ENCODE measurements at regions of chr2 and their contacts with region 1.

Region 1: DNA sequence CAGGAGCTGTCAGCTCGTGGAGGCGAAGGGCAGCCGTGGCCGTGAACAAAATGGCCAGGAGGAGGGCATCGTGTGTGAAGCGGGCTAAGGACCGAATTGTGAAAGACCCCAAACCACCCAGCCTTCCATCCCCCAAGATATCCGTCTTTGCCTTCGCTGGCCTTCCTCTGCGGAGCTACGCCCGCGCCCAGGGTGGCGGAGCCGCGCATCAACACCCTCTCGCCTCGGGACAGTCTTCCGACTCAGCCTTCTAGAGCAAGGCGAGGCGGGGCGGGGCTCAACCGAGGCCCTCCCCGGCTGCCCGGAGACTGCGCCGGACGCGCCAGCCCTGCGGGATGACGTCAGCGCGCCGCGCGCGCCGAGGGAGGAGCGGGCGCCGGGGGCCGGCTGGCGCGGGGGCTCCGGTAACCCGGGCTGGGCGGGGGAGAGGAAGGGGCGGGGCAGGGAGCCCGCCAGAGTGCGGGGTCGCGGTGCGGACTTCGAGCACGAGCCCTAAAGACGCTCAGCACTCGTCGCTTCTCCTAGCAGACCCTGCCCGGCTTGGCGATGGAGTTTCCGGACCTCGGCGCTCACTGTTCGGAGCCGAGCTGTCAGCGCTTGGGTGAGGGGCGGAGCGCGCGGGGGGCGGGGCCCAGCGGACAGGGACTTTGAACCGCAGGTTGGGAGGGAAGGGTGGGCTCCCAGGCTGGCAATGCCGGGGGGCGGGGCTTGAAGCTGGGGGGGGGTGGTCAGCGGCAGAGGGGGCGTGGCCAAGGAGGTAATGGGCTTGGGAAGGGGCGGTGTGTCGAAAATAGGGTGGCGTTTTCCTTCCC is at the start of gene ZFAND2B:
- DNase-seq: peak; percentile 88 to 98 (median 95)
- ATAC-seq: peak; percentile 93
- H3K4me3 ChIP-seq: peak within 1 kb of the TSS; percentile 69
- H3K4me3 Mint-ChIP-seq: peak within 1 kb of the TSS; percentile 90
- H3K27ac ChIP-seq: peak within 1 kb of the TSS; percentile 89 to 90
- H3K27ac Mint-ChIP-seq: peak within 1 kb of the TSS; percentile 93
- H3K4me1 ChIP-seq: peaks cover 53% of the 10 kb centered on the region
- H3K4me1 Mint-ChIP-seq: peaks cover 47% of the 10 kb centered on the region
- H3K27me3 ChIP-seq: no peaks in the 10 kb centered on the region
- H3K27me3 Mint-ChIP-seq: no peaks in the 10 kb centered on the region
- CTCF ChIP-seq: no peak
- total RNA-seq, gene ZFAND2B: 65.9 to 67.4 TPM

Region 2: GRCh38 chr2:219155054-219155644 is 51.5 kb before region 1 on chr2:
- CTCF ChIA-PET with region 1: interaction called, 32 read pairs
- POLR2A ChIA-PET with region 1: interaction called, 16 read pairs
- intact Hi-C with region 1: loop called (anchors 1 kb)
- DNase-seq: peak in 5 of 14 experiments; percentile 18 to 84 (median 75)
- ATAC-seq: peak; percentile 21
- H3K4me3 ChIP-seq: no peak overlapping the region
- H3K4me3 Mint-ChIP-seq: no peak overlapping the region
- H3K27ac ChIP-seq: no peak overlapping the region
- H3K27ac Mint-ChIP-seq: no peak overlapping the region
- H3K4me1 ChIP-seq: peaks cover 7% of the 10 kb centered on the region
- H3K4me1 Mint-ChIP-seq: peaks cover 13% of the 10 kb centered on the region
- H3K27me3 ChIP-seq: no peaks in the 10 kb centered on the region
- H3K27me3 Mint-ChIP-seq: no peaks in the 10 kb centered on the region
- CTCF ChIP-seq: peak; percentile 78

Region 3: DNA sequence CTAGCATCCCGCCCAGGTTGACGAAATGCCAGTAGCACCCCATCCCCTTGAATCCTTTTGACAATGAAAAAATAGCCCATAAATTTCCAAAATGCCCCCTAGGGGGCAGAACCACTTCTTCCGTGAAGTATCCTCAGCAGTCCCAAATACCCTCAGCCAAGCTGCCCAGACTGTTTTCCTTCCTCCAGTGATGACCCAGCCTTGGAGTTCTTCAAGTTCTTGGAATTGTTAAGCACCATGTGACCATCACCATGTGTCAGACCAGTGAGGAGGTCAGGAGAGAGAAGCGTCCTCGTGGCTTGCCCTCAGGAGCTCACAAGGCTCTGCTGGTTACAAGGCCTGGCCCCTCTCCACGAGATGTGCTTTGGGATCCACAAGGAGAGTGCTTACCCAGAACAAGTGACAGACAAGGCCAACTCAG is 35.4 kb before region 1 on chr2:
- CTCF ChIA-PET with region 1: interaction called, 12 read pairs
- POLR2A ChIA-PET with region 1: interaction called, 139 read pairs
- intact Hi-C with region 1: loop called (anchors 1 kb)
- DNase-seq: peak in 7 of 14 experiments; percentile 5 to 69 (median 53)
- ATAC-seq: peak; percentile 62
- H3K4me3 ChIP-seq: no peak overlapping the region
- H3K4me3 Mint-ChIP-seq: no peak overlapping the region
- H3K27ac ChIP-seq: peak overlapping the region in 1 of 2 donors; percentile 4
- H3K27ac Mint-ChIP-seq: peak overlapping the region; percentile 69
- H3K4me1 ChIP-seq: peaks cover 42% of the 10 kb centered on the region
- H3K4me1 Mint-ChIP-seq: peaks cover 35% of the 10 kb centered on the region
- H3K27me3 ChIP-seq: no peaks in the 10 kb centered on the region
- H3K27me3 Mint-ChIP-seq: no peaks in the 10 kb centered on the region
- CTCF ChIP-seq: peak; percentile 79

Region 4: GRCh38 chr2:219229305-219230058 is 22.8 kb after region 1 on chr2 and contains the starts of genes ANKZF1 and ATG9A:
- CTCF ChIA-PET with region 1: interaction called, 5 read pairs
- POLR2A ChIA-PET with region 1: interaction called, 23 read pairs
- intact Hi-C with region 1: no loop called
- DNase-seq: peak; percentile 95 to 99 (median 97)
- ATAC-seq: peak; percentile 94
- H3K4me3 ChIP-seq: peak within 1 kb of the TSS; percentile 76
- H3K4me3 Mint-ChIP-seq: peak within 1 kb of the TSS; percentile 96
- H3K27ac ChIP-seq: peak within 1 kb of the TSS; percentile 46 to 91
- H3K27ac Mint-ChIP-seq: peak within 1 kb of the TSS; percentile 99
- H3K4me1 ChIP-seq: peaks cover 49% of the 10 kb centered on the region
- H3K4me1 Mint-ChIP-seq: peaks cover 65% of the 10 kb centered on the region
- H3K27me3 ChIP-seq: no peaks in the 10 kb centered on the region
- H3K27me3 Mint-ChIP-seq: no peaks in the 10 kb centered on the region
- CTCF ChIP-seq: no peak
- total RNA-seq, gene ANKZF1: 128 to 135 TPM
- total RNA-seq, gene ATG9A: 105 to 106 TPM

Region 5: DNA sequence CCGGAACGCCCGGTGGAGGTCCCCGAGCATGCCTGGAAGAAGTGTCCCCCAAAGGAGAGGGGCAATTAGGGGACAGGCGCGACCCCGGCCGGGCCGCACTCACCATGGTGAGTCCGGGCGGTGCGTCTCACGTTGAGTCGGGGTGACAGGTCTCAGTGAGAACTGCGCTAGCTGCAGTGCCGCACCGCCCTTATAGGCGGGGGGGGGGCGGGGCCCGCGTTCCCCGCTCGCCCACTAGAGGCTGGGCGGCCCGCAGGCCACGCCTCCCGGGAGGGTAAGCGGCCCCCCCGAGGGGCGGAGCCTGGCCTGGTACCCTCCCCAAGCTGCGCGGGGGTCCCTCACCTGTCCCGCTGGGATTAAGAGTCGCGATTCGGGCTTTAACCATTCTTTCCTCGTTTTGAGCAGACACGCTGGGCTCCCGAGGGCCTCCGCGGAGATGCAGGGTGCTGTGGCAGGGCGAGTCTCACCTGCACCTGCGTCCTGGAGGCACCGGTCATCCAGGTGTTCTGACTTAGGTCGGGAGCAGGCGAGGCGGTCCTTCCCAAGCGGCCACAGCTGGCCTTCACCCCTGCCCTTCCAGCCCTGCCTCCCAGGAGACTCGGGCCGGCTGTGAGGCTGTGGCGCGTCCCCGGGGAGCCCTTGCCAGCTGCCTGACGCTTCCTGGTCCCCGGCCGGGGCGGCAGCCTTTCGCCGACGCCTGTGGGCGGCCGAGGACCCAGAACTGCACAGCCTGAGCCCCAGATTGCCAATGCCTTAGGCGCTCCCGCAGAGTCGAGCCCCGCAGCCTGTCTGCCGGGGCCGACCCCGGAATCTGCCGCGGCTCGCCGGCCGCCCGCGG is 47.3 kb after region 1 on chr2 and contains the start of gene TUBA4A:
- CTCF ChIA-PET with region 1: interaction called, 10 read pairs
- POLR2A ChIA-PET with region 1: interaction called, 39 read pairs
- intact Hi-C with region 1: no loop called
- DNase-seq: peak; percentile 83 to 95 (median 90)
- ATAC-seq: peak; percentile 71
- H3K4me3 ChIP-seq: peak within 1 kb of the TSS; percentile 88
- H3K4me3 Mint-ChIP-seq: peak within 1 kb of the TSS; percentile 88
- H3K27ac ChIP-seq: peak within 1 kb of the TSS; percentile 73 to 87
- H3K27ac Mint-ChIP-seq: peak within 1 kb of the TSS; percentile 96
- H3K4me1 ChIP-seq: peaks cover 49% of the 10 kb centered on the region
- H3K4me1 Mint-ChIP-seq: peaks cover 49% of the 10 kb centered on the region
- H3K27me3 ChIP-seq: no peaks in the 10 kb centered on the region
- H3K27me3 Mint-ChIP-seq: no peaks in the 10 kb centered on the region
- CTCF ChIP-seq: no peak
- total RNA-seq, gene TUBA4A: 183 to 185 TPM

Region 6: GRCh38 chr2:219294356-219295351 is 88.0 kb after region 1 on chr2:
- CTCF ChIA-PET with region 1: interaction called, 32 read pairs
- POLR2A ChIA-PET with region 1: interaction called, 13 read pairs
- intact Hi-C with region 1: no loop called
- DNase-seq: peak; percentile 78 to 96 (median 88)
- ATAC-seq: peak; percentile 94
- H3K4me3 ChIP-seq: peak overlapping the region; percentile 55
- H3K4me3 Mint-ChIP-seq: peak overlapping the region; percentile 67
- H3K27ac ChIP-seq: no peak overlapping the region
- H3K27ac Mint-ChIP-seq: peak overlapping the region; percentile 14
- H3K4me1 ChIP-seq: peaks cover 33% of the 10 kb centered on the region
- H3K4me1 Mint-ChIP-seq: peaks cover 32% of the 10 kb centered on the region
- H3K27me3 ChIP-seq: peaks cover 0 to 3% of the 10 kb centered on the region in 2 experiments
- H3K27me3 Mint-ChIP-seq: peaks cover 7% of the 10 kb centered on the region
- CTCF ChIP-seq: peak; percentile 99

Region 7: GRCh38 chr2:219406861-219407230 is 200.2 kb after region 1 on chr2:
- CTCF ChIA-PET with region 1: no interaction called
- POLR2A ChIA-PET with region 1: no interaction called
- intact Hi-C with region 1: no loop called
- DNase-seq: no peak
- ATAC-seq: no peak
- H3K4me3 ChIP-seq: no peak overlapping the region
- H3K4me3 Mint-ChIP-seq: no peak overlapping the region
- H3K27ac ChIP-seq: no peak overlapping the region
- H3K27ac Mint-ChIP-seq: no peak overlapping the region
- H3K4me1 ChIP-seq: no peaks in the 10 kb centered on the region
- H3K4me1 Mint-ChIP-seq: peaks cover 5% of the 10 kb centered on the region
- H3K27me3 ChIP-seq: peaks cover 0 to 8% of the 10 kb centered on the region in 2 experiments
- H3K27me3 Mint-ChIP-seq: peaks cover 31% of the 10 kb centered on the region
- CTCF ChIP-seq: no peak

Region 8: GRCh38 chr2:219430633-219431615 is 224.3 kb after region 1 on chr2:
- CTCF ChIA-PET with region 1: no interaction called
- POLR2A ChIA-PET with region 1: no interaction called
- intact Hi-C with region 1: no loop called
- DNase-seq: peak in 2 of 14 experiments; percentile 14 to 27
- ATAC-seq: no peak
- H3K4me3 ChIP-seq: no peak overlapping the region
- H3K4me3 Mint-ChIP-seq: no peak overlapping the region
- H3K27ac ChIP-seq: no peak overlapping the region
- H3K27ac Mint-ChIP-seq: no peak overlapping the region
- H3K4me1 ChIP-seq: peaks cover 10% of the 10 kb centered on the region
- H3K4me1 Mint-ChIP-seq: no peaks in the 10 kb centered on the region
- H3K27me3 ChIP-seq: peaks cover 15 to 24% of the 10 kb centered on the region in 2 experiments
- H3K27me3 Mint-ChIP-seq: peaks cover 40% of the 10 kb centered on the region
- CTCF ChIP-seq: peak; percentile 10

Measured in CD4-positive, alpha-beta T cell (primary cell).